Activated T-helper 1 cell treated with anti-CD3 and anti-CD28 coated beads, Interleukin-12 subunit alpha, Interleukin-12 subunit beta, Interleukin-2, Interleukin-4 antibody, amounts not matched to agents 30 ng/mL and 10 ng/mL and 1 ng/mL, durations not matched to agents 14 hours and 24 hours and 36 hours (primary cell): ENCODE measurements at regions of chr13 and their contacts with region 1.

Region 1: GRCh38 chr13:27251166-27252091 is at the start of gene RPL21:
- DNase-seq: peak; percentile 86
- H3K4me3 Mint-ChIP-seq: peak within 1 kb of the TSS; percentile 94
- H3K27ac Mint-ChIP-seq: peak within 1 kb of the TSS; percentile 91
- H3K4me1 Mint-ChIP-seq: peaks cover 40% of the 10 kb centered on the region
- H3K27me3 Mint-ChIP-seq: no peaks in the 10 kb centered on the region
- total RNA-seq, gene RPL21: 1,045 and 1,084 TPM in 2 replicates

Region 2: DNA sequence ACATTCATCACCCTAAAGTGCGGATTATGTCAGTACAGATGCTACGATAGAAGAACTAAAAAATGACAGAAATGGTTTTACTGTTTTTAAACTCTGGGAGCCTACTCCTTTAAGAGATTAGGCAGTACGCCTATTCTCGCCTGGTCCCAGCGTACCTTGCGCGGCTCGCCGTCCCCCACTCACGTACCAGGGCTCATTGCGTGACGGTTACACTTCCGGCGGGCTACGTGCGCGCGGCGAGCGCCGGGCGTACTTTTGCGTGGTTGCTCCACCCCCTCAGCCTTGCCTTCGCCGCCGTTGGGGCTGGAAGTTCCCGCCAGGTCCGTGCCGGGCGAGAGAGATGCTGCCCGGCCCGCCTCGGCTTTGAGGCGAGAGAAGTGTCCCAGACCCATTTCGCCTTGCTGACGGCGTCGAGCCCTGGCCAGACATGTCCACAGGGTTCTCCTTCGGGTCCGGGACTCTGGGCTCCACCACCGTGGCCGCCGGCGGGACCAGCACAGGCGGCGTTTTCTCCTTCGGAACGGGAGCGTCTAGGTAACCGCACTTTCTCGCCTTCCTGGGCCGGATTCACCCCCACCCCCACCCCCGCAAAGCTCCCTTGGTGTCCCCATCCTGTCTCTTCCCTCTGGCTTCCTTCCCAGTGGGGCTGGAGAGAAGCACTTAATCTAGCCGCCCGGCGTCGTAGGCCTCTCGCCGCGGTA is 1949.9 kb before region 1 on chr13 and contains the start of gene NUP58:
- intact Hi-C with region 1: loop called (anchors 5 kb)
- DNase-seq: peak; percentile 94
- H3K4me3 Mint-ChIP-seq: peak within 1 kb of the TSS; percentile 96
- H3K27ac Mint-ChIP-seq: peak within 1 kb of the TSS; percentile 94
- H3K4me1 Mint-ChIP-seq: peaks cover 35% of the 10 kb centered on the region
- H3K27me3 Mint-ChIP-seq: peaks cover 5% of the 10 kb centered on the region
- total RNA-seq, gene NUP58: 131 and 142 TPM in 2 replicates

Region 3: GRCh38 chr13:27022571-27023311 is 228.7 kb before region 1 on chr13:
- intact Hi-C with region 1: loop called (anchors 1 kb)
- DNase-seq: no peak
- H3K4me3 Mint-ChIP-seq: no peak overlapping the region
- H3K27ac Mint-ChIP-seq: peak overlapping the region; percentile 32
- H3K4me1 Mint-ChIP-seq: peaks cover 23% of the 10 kb centered on the region
- H3K27me3 Mint-ChIP-seq: peaks cover 7% of the 10 kb centered on the region

Region 4: GRCh38 chr13:27270594-27271520 is 19.4 kb after region 1 on chr13 and contains the start of gene RASL11A:
- intact Hi-C with region 1: loop called (anchors 1 kb)
- DNase-seq: peak; percentile 63
- H3K4me3 Mint-ChIP-seq: peak within 1 kb of the TSS; percentile 89
- H3K27ac Mint-ChIP-seq: peak within 1 kb of the TSS; percentile 24
- H3K4me1 Mint-ChIP-seq: peaks cover 11% of the 10 kb centered on the region
- H3K27me3 Mint-ChIP-seq: peaks cover 40% of the 10 kb centered on the region
- total RNA-seq, gene RASL11A: 1.9 and 3.2 TPM in 2 replicates

Region 5: DNA sequence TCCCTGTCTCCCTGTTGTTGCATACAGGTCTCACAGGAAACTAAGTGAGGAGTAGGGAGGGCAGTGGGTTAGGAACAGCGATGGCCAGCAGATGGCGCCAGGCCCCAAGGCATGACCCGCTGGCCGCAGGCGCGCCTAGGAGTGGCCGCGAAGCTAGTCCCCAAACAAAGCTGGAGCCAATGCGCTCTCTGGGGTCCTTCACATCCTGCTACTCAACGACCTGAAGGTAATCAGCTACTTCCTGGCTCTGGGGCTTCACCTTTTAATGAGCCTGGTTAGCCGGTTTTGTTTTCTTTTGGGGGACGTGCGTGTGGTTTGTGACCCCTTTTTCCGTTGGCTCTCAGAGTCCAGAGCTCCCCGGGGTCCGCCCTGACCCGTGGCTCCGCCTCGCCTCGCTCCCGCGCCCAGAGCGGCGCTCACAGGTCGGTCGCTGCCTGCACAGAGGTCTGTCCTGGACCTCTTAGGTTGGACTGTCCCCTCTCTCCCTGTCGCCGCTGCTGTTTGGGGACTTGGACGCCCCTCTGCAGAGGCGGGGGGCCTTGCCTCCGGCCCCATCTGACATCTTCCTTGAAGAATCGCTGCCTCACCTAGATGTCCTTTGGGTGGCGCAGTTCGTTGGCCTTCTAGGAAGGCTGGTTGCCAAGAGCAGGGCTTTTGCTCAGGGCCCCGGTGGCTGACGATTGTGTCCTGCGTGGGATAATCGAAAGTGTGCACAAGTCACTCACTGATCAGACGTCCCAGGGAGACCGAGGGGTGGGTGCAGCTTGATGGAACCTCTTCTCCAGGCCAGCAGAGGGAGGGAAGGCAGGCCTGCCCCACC is 110.8 kb after region 1 on chr13:
- intact Hi-C with region 1: loop called (anchors 2 kb)
- DNase-seq: peak; percentile 71
- H3K4me3 Mint-ChIP-seq: peak overlapping the region; percentile 49
- H3K27ac Mint-ChIP-seq: no peak overlapping the region
- H3K4me1 Mint-ChIP-seq: no peaks in the 10 kb centered on the region
- H3K27me3 Mint-ChIP-seq: peaks cover 25% of the 10 kb centered on the region

Region 6: GRCh38 chr13:27449936-27450828 is 198.8 kb after region 1 on chr13 and contains the start of gene MTIF3:
- intact Hi-C with region 1: loop called (anchors 1 kb)
- DNase-seq: peak; percentile 95
- H3K4me3 Mint-ChIP-seq: peak within 1 kb of the TSS; percentile 91
- H3K27ac Mint-ChIP-seq: peak within 1 kb of the TSS; percentile 93
- H3K4me1 Mint-ChIP-seq: peaks cover 58% of the 10 kb centered on the region
- H3K27me3 Mint-ChIP-seq: no peaks in the 10 kb centered on the region
- total RNA-seq, gene MTIF3: 30.4 and 36.0 TPM in 2 replicates

Region 7: DNA sequence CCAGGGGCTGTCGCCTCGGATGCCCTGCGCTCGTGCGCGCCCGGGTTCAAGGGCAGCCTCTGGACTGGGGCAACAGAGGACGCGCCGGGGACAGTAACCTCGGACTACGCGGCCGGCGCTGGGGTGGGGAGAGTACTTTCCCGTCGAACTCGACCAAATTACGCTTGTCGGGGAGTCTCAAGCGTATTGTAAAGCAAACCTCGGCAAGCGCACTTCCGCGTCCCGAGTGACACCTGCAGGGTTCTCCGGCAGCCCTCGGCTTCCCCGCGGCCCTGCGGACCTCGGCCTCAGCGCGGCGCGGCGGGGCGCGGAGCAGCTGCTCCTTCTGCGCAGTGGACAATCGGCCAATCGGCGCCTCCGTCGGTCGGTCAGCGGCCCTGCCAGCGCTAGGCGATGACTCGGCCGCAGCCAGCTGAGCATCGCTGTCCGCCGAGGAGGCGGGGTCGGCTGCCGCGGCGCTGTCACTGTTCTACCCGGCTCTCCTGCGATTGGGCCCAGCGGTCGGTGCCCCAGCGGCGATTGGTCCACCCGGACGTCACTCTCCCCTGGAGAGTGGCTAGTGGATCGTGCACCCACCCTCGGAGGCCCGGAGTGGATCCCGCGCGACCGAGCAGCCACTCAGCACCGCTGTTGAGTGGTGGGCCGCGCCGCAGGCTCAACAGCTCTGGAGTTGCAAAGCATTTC is 1467.3 kb after region 1 on chr13 and contains the start of gene SLC46A3:
- intact Hi-C with region 1: loop called (anchors 5 kb)
- DNase-seq: peak; percentile 95
- H3K4me3 Mint-ChIP-seq: peak within 1 kb of the TSS; percentile 85
- H3K27ac Mint-ChIP-seq: peak within 1 kb of the TSS; percentile 82
- H3K4me1 Mint-ChIP-seq: peaks cover 32% of the 10 kb centered on the region
- H3K27me3 Mint-ChIP-seq: peaks cover 4% of the 10 kb centered on the region
- total RNA-seq, gene SLC46A3: 2.7 and 3.8 TPM in 2 replicates